IMR-90 (cell line): ENCODE measurements at regions of chr14 and their contacts with region 1.

Region 1: GRCh38 chr14:103500148-103500990 is 22.3 kb downstream of the CKB start:
- DNase-seq: peak; percentile 81
- ATAC-seq: peak; percentile 96
- H3K4me3 ChIP-seq: no peak overlapping the region
- H3K27ac ChIP-seq: no peak overlapping the region
- H3K4me1 ChIP-seq: no peaks in the 10 kb centered on the region; the same call in 1 of the 2 replicates
- H3K27me3 ChIP-seq: no peaks in the 10 kb centered on the region
- CTCF ChIP-seq: peak; percentile 87
- POLR2A ChIP-seq: no peak
- RAD21 ChIP-seq: peak; percentile 65

Region 2: DNA sequence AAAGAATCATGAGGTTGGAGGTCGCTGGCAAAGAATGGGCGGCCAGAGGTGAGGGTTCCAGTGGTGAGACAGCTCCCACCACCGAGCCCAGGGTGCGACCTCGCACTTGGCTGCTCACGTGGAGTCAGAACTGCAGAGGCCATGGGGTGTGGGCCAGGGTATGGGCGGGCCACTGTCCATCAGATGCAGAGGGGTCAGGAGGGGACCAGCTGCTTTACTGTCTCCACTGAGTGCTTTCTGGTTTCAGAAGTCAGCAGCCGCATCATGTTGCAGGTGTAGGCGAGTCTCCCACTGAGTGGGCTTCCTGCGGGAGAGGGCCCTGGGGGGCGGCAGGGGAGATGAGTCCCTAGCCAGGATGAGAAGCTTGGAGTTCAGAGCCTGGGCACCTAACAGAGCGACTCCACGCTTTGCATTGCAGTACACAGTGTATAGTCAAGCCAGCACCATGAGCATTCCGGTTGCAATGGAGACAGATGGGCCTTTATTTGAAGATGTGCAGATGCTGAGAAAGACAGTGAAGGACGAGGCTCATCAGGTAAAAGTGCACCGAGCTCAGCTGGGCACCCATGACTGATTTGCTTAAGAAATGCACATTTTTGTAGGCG is 1582.9 kb before region 1 on chr14:
- CTCF ChIA-PET with region 1: no interaction called
- POLR2A ChIA-PET with region 1: interaction called, 14 read pairs
- dilution Hi-C with region 1: no loop called
- in situ Hi-C with region 1: no loop called
- intact Hi-C with region 1: no loop called
- DNase-seq: no peak
- ATAC-seq: peak; percentile 44; the same call in 1 of the 2 replicates
- H3K4me3 ChIP-seq: no peak overlapping the region
- H3K27ac ChIP-seq: no peak overlapping the region
- H3K4me1 ChIP-seq: no peaks in the 10 kb centered on the region
- H3K27me3 ChIP-seq: no peaks in the 10 kb centered on the region
- CTCF ChIP-seq: no peak
- POLR2A ChIP-seq: no peak
- RAD21 ChIP-seq: no peak